HCT116 (cell line): ENCODE measurements at regions of chr5 and their contacts with region 1.

Region 1: GRCh38 chr5:80308526-80308925 is 11.3 kb upstream of the SPZ1 start:
- DNase-seq: no peak
- ATAC-seq: no peak
- H3K4me3 ChIP-seq: no peak overlapping the region
- H3K27ac ChIP-seq: no peak overlapping the region
- H3K4me1 ChIP-seq: no peaks in the 10 kb centered on the region
- H3K27me3 ChIP-seq: no peaks in the 10 kb centered on the region
- CTCF ChIP-seq: no peak
- POLR2A ChIP-seq: no peak
- RAD21 ChIP-seq: no peak

Region 2: DNA sequence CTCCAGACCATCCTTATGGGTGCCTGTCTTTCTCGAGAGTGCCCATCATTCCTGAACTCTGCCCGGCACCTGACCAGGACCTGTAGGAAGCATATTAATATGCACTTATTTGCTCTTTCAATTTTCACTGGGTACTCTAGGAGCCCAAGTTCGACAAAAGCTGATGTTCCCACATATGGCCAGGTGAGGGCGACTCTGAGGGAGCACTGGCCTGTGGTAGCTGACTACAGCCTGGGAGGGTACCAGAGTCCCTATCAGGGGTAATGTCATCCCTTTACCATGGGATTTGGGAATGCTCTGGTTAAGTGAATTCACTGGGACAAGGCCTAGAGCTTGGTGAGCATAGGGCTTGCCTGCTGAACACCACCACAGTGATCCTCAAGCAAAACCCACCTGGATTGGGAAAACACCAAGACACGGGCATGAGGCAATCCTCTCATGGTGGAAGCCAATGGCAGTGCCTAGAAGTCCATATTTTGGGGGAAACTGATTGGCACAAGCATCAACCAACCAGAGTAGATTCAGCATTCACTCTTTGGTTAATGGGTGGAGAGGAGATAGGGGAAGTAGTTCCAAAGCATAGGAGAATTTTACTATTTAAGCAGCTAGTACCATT is 429.7 kb before region 1 on chr5:
- CTCF ChIA-PET with region 1: no interaction called
- POLR2A ChIA-PET with region 1: no interaction called
- RAD21 ChIA-PET with region 1: no interaction called
- intact Hi-C with region 1: loop called (anchors 5 kb)
- DNase-seq: peak; percentile 31
- ATAC-seq: peak; percentile 98
- H3K4me3 ChIP-seq: no peak overlapping the region
- H3K27ac ChIP-seq: no peak overlapping the region
- H3K4me1 ChIP-seq: no peaks in the 10 kb centered on the region
- H3K27me3 ChIP-seq: no peaks in the 10 kb centered on the region
- CTCF ChIP-seq: peak; percentile 53 to 84 (median 80); a peak in 5 of 6 replicates
- POLR2A ChIP-seq: no peak
- RAD21 ChIP-seq: peak; percentile 49

Region 3: DNA sequence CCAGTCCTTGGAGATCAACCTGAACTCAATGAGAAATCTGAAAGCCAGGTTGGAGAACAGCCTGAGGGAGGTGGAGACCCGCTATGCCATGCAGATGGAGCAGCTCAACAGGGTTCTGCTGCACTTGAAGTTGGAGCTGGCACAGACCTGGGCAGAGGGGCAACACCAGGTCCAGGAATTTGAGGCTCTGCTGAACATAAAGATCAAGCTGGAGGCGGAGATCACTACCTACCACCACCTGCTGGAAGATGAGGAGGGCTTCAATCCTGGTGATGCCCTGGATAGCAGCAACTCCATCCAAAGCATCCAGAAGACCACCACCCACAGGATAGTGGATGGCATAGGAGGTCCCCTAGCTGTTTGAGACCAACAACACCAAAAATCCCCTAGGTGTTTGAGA is 19.2 kb before region 1 on chr5:
- CTCF ChIA-PET with region 1: no interaction called
- POLR2A ChIA-PET with region 1: no interaction called
- RAD21 ChIA-PET with region 1: no interaction called
- intact Hi-C with region 1: no loop called
- DNase-seq: no peak
- ATAC-seq: no peak
- H3K4me3 ChIP-seq: no peak overlapping the region
- H3K27ac ChIP-seq: no peak overlapping the region
- H3K4me1 ChIP-seq: no peaks in the 10 kb centered on the region
- H3K27me3 ChIP-seq: no peaks in the 10 kb centered on the region
- CTCF ChIP-seq: no peak
- POLR2A ChIP-seq: no peak
- RAD21 ChIP-seq: no peak